ENCODE measurements at regions of chr14 and their contacts with region 1.

Region 1: DNA sequence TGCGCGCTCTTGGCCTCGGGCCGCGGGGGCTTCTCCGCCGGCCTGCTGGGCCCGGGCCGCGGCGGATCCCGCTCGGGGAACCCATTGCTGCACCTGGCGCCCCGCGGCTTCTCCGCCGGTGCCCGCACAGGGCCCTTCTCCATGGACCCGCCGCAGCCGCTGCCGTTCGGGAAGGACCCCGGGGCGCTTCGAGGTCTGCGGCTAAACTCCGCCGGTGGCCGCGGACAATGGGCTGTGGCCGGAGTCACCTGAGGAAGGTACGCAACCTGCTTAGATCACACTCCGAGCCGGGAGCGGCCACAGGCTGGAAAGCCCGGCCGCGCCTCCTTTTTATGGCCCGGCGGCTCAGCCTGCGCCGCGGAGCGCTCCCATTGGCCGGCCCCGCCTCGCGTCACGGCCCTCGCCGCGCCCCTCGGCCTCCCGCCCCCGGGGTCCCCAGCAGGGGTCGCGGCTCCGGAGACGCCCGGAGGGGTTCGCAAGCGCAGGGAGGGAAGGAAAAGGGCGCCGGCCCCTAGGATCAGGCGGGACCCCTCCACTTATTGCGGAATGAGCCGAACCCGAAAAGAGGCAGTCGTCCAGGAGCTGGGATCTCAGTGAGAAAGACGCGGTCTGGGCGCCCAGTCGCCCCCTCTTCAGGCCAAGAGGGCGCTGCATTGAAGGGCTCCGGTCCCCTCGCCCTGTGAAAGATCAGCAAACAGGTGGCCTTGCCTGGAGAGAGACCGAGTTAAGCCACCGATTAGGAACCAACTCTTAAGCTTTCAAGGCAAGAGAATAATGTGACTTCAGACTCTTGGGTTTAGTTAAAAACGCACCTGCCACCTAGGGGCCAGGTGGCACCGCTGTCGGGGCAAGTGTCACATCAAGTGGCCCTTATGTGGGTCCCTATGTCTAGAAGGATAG is at the start of gene GCH1:
- DNase-seq: peak; percentile 81
- H3K4me3 Mint-ChIP-seq: peak within 1 kb of the TSS; percentile 89
- H3K27ac Mint-ChIP-seq: peak within 1 kb of the TSS; percentile 85
- H3K4me1 Mint-ChIP-seq: peaks cover 46% of the 10 kb centered on the region
- H3K27me3 Mint-ChIP-seq: no peaks in the 10 kb centered on the region
- total RNA-seq, gene GCH1: 61.4 and 62.4 TPM in 2 replicates

Region 2: GRCh38 chr14:54440873-54441868 is 461.6 kb before region 1 on chr14 and contains the start of gene CNIH1:
- intact Hi-C with region 1: loop called (anchors 5 kb)
- DNase-seq: peak; percentile 91
- H3K4me3 Mint-ChIP-seq: peak within 1 kb of the TSS; percentile 89
- H3K27ac Mint-ChIP-seq: peak within 1 kb of the TSS; percentile 93
- H3K4me1 Mint-ChIP-seq: peaks cover 45% of the 10 kb centered on the region
- H3K27me3 Mint-ChIP-seq: peaks cover 2% of the 10 kb centered on the region
- total RNA-seq, gene CNIH1: 105 and 109 TPM in 2 replicates

Region 3: DNA sequence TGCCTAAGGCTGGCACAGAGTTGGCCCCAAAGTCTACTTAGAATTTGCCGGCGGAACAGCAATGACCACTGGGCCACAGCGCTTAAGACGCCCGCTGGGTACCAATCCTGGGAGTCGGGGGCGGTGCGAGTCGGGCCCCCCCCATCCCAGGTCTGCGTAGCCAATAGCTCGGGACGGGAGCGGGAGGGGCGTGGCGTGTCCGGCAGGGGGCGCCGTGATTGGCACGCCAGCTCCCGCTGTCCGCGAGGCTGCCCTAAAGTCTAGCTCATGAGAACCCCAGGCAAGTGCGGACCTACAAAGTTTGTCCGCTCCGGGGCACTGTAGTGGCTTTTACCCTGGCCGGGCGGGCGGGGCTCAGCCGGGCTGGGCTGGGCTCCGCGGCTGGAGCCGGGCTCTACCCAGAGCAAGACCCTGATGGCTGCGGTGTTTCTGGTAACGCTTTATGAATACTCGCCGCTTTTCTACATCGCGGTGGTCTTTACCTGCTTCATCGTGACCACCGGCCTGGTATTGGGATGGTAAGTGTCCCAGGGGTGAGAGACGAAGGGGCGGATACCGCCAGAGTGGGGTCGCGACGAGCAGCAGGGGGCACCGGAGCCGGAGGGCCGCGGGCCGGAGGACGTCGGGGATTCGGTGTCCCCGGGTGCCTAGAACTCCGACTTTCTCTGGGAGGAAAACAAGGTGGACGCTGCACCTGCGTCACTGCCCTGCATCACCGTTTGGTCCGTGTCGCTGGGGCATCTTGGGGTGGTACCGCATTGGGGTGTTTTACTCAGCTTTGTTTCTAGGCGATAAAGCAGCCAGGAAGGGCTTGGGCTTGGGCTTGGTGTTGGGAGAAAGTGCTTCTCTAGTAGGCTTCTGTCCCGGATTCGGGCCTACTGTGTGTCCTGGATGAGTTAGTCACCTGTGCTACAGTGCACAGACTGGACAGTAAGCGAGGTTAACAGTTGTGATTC is 392.9 kb before region 1 on chr14 and contains the start of gene CGRRF1:
- intact Hi-C with region 1: loop called (anchors 5 kb)
- DNase-seq: peak; percentile 94
- H3K4me3 Mint-ChIP-seq: peak within 1 kb of the TSS; percentile 95
- H3K27ac Mint-ChIP-seq: peak within 1 kb of the TSS; percentile 83
- H3K4me1 Mint-ChIP-seq: peaks cover 40% of the 10 kb centered on the region
- H3K27me3 Mint-ChIP-seq: peaks cover 8% of the 10 kb centered on the region
- total RNA-seq, gene CGRRF1: 8.5 and 13.2 TPM in 2 replicates

Region 4: DNA sequence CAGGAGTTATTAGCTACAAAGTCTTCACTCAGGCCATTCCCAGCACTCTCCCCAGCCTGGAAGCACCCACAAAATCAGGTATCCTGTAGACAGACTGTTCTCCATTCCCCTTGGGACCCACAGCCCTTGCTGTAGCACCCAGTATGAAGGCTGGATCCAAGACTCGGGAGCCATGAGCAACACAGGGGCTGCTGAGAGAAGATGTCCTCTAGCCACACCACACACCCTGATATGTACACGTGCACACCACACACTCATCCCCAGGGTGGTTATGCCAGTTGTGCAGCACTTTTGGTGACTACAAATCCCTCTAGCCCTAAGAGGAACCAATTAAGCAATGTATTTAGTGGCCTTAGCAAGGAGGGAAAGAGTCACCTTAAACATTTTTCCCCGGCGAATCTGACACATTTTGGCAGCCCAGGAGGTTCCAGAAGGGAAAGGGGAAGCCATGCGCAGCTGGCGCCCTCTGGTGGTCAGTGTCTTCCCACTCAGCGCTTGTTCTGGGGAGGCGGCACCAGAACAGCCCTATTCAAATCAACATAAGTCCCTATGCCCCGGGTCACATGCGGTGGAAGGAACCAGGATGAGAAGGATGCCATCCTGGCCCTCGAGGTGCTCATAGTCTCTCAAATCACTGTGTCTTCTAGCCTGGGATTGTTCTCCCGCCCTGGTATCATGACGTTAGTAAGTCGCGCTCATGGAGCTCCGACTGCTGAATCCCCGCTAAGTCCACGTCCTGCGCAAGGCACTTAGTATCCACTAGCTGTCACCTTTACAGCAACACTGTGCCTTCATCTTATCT is 97.0 kb before region 1 on chr14:
- intact Hi-C with region 1: no loop called
- DNase-seq: peak; percentile 48
- H3K4me3 Mint-ChIP-seq: no peak overlapping the region
- H3K27ac Mint-ChIP-seq: no peak overlapping the region
- H3K4me1 Mint-ChIP-seq: no peaks in the 10 kb centered on the region
- H3K27me3 Mint-ChIP-seq: peaks cover 10% of the 10 kb centered on the region

Region 5: DNA sequence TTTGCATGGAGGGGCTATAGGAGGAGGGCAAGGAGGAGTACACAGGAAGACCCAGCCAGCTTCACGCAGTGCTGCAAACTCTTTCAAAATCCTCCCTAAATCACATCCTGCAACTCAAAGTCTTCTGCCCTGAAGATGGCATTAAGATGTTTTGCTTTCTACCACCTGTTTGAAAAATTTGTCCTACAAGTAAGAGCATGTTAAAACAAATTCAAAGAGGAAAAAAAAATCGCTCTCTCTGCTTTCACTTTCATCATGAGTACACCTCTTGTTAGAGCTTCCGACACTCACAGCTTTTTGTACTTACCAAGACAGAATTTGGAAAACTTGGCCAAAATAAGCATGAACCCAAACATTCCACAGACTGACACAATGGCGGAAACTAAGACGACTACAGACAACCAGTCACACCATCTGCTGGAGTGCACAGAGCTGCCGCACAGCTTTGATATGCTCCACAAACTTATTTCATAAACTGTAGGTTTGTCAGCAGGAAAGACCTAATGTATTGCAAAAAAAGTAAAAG is 21.5 kb before region 1 on chr14:
- intact Hi-C with region 1: loop called (anchors 2 kb)
- DNase-seq: peak; percentile 30
- H3K4me3 Mint-ChIP-seq: peak overlapping the region; percentile 86
- H3K27ac Mint-ChIP-seq: peak overlapping the region; percentile 94
- H3K4me1 Mint-ChIP-seq: peaks cover 53% of the 10 kb centered on the region
- H3K27me3 Mint-ChIP-seq: no peaks in the 10 kb centered on the region

Region 6: DNA sequence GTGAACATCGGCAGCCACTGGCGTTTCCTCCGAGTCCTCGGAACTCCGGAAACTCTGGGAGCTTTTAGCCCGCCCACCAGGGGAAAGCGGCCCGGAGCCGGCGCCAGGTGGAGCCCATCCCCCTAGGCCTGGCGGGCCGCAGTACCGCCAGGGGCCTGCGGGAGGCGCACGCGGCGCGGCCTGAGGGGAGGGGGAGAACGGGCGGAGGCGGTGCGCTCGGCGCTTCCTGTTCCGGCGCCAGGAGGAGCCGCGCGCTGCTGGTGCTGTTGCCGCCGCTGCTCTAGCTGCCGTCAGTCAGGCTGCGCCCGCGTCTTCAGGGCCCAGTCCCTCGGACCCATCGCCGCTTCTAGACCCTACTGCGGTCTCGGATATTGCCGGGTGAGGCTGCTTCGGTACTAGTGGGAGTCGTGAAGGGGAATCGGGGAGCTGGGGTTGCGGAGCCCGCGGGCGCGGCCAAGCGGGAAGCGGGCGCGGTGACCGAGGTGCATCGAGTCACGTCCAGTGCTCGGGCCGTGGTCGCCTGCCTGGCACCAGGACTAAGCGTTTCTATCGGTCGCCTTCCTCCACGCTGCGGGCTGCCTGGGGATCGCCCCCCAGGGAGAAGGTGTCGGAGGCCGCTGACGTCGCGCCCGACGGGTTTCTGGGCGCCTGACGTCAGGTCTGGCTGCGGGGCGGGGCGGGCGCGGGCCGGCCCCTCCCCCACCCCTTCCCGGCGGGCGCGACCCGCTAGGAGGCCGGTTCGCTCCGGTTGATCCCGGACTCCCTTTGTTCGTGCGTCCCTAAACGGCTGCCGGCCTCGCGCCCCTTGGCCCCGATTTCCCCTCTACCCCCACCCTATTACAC is 148.9 kb after region 1 on chr14 and contains the start of gene MAPK1IP1L:
- intact Hi-C with region 1: loop called (anchors 2 kb)
- DNase-seq: peak; percentile 90
- H3K4me3 Mint-ChIP-seq: peak within 1 kb of the TSS; percentile 94
- H3K27ac Mint-ChIP-seq: peak within 1 kb of the TSS; percentile 95
- H3K4me1 Mint-ChIP-seq: peaks cover 37% of the 10 kb centered on the region
- H3K27me3 Mint-ChIP-seq: no peaks in the 10 kb centered on the region
- total RNA-seq, gene MAPK1IP1L: 139 and 141 TPM in 2 replicates